Heart left ventricle (tissue), 16 donors: ENCODE measurements at regions of chr7 and their contacts with region 1.

Region 1: DNA sequence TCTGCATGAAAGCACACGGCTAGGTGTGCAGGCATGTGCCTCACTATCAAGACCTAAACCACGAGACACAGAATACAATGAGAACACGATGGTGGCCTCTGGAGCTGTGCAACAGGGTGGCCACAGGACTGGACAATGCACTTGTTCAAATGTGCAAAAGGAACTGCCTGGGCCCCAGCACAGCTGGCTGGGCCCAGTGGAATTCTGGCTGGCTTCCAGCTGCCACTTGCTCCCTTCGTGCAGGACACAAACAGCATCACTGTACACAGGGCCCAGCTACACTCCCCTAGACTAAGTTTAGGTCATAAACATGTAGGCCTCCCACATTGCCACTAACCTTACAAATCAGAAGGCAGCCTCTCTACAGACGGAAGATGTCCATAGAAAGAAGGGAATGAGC is 23.4 kb downstream of the DOCK4 start:
- DNase-seq: peak; percentile 46 to 81 (median 72)
- ATAC-seq: peak; percentile 76 to 82 (median 79)
- H3K4me3 ChIP-seq: no peak overlapping the region
- H3K27ac ChIP-seq: peak overlapping the region in 6 of 12 donors; percentile 5 to 37 (median 14)
- H3K4me1 ChIP-seq: peaks cover 7 to 64% (median 48%) of the 10 kb centered on the region in 12 donors
- H3K27me3 ChIP-seq: no peaks in the 10 kb centered on the region
- CTCF ChIP-seq: no peak
- POLR2A ChIP-seq: no peak

Region 2: DNA sequence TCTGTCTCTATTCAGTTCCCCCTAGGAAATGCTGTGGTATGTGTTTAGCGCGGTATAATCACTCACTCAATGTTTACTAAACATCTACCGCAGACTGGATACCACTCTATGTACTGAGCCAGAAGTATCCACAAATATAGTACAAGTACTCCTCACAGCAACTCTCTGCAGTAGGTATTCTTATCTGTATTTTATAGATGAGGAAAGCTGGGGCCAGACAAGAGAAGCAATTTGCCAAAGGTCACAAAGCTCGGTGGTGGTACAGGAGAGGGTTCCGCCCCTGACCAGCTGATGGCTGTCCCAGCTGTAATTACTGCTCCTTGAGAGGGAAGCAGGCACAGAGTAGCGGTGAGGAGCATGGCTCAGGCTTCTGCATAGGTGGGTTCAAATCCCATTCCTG is 160.6 kb before region 1 on chr7:
- intact Hi-C with region 1: no loop called
- DNase-seq: no peak
- ATAC-seq: peak; percentile 21 to 65 (median 54)
- H3K4me3 ChIP-seq: no peak overlapping the region
- H3K27ac ChIP-seq: no peak overlapping the region
- H3K4me1 ChIP-seq: peaks cover 0 to 62% (median 19%) of the 10 kb centered on the region in 12 donors
- H3K27me3 ChIP-seq: no peaks in the 10 kb centered on the region
- CTCF ChIP-seq: no peak
- POLR2A ChIP-seq: no peak

Region 3: DNA sequence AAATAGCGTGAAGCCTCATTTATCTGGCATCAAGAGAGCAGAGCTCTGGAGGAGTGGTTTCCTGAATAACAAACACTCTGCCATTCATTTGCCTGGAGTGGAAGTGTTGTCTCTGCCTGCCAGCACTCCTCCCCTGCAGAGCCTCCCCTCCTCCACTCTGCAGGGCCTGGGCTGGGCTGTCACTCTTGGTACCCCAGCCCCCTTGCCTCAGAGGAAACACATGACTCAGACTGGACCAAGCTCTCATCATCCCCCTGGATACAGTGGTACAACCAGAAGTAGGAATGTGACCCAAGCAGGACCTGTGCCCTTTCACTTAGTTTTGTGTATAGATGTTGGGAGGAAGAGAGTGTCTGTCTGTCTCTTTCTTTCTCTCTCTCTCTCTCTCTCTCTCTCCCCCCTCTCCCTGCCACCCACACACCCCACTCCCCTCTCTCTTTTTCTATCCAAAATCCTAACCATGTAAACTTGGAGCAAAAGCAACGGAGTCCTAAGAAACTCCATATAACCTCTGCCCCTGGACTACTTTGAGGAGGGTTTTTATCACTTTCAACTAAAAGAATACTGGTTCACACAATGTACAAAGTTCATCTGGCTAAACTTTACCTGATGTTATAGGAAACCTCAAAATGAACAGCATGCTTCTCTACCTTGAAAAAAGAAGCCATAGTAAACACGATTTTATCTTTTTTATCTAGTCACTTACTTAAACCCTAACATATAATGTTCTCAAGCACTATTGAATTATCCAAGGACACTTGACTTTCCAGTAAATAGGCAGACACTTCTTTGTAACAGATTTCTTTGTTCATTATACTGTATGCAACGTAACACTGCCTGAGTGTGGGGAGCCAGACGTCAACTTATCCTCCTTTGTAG is 20.4 kb before region 1 on chr7:
- intact Hi-C with region 1: loop called in 1 of 10 experiments (anchors 2 kb)
- DNase-seq: peak; percentile 47 to 66 (median 60)
- ATAC-seq: peak; percentile 88 to 94 (median 93)
- H3K4me3 ChIP-seq: no peak overlapping the region
- H3K27ac ChIP-seq: peak overlapping the region in 6 of 12 donors; percentile 9 to 50 (median 33)
- H3K4me1 ChIP-seq: peaks cover 3 to 61% (median 37%) of the 10 kb centered on the region in 12 donors
- H3K27me3 ChIP-seq: no peaks in the 10 kb centered on the region
- CTCF ChIP-seq: no peak
- POLR2A ChIP-seq: no peak